ENCODE measurements at regions of chr1 and their contacts with region 1.

Region 1: GRCh38 chr1:77683160-77684148 is 996 bp upstream of the ZZZ3 start:
- DNase-seq: peak; percentile 45
- ATAC-seq: peak; percentile 84
- H3K4me3 ChIP-seq: peak overlapping the region; percentile 71
- H3K27ac ChIP-seq: peak overlapping the region; percentile 88
- H3K4me1 ChIP-seq: 0 out of 2 replicates have a peak, but pooled peaks cover 3% of the 10 kb centered on the region
- H3K27me3 ChIP-seq: no peaks in the 10 kb centered on the region
- CTCF ChIP-seq: peak; percentile 77 to 84 (median 80); a peak in 5 of 6 replicates
- EP300 ChIP-seq: no peak
- POLR2A ChIP-seq: peak; percentile 89
- RAD21 ChIP-seq: peak; percentile 47

Region 2: GRCh38 chr1:77538956-77539518 is 144.4 kb before region 1 on chr1:
- CTCF ChIA-PET with region 1: no interaction called
- POLR2A ChIA-PET with region 1: no interaction called
- RAD21 ChIA-PET with region 1: interaction called, 3 read pairs
- SMC1A ChIA-PET with region 1: interaction called, 4 read pairs
- in situ Hi-C with region 1: no loop called
- intact Hi-C with region 1: loop called (anchors 5 kb)
- DNase-seq: no peak
- ATAC-seq: peak; percentile 77
- H3K4me3 ChIP-seq: no peak overlapping the region
- H3K27ac ChIP-seq: no peak overlapping the region
- H3K4me1 ChIP-seq: peaks cover 30% of the 10 kb centered on the region
- H3K27me3 ChIP-seq: no peaks in the 10 kb centered on the region
- CTCF ChIP-seq: no peak
- EP300 ChIP-seq: no peak
- POLR2A ChIP-seq: no peak
- RAD21 ChIP-seq: no peak

Region 3: GRCh38 chr1:77585610-77586314 is 97.7 kb before region 1 on chr1:
- CTCF ChIA-PET with region 1: no interaction called
- POLR2A ChIA-PET with region 1: no interaction called
- RAD21 ChIA-PET with region 1: no interaction called
- SMC1A ChIA-PET with region 1: interaction called, 3 read pairs
- in situ Hi-C with region 1: no loop called
- intact Hi-C with region 1: loop called (anchors 5 kb)
- DNase-seq: no peak
- ATAC-seq: peak; percentile 40
- H3K4me3 ChIP-seq: no peak overlapping the region
- H3K27ac ChIP-seq: no peak overlapping the region
- H3K4me1 ChIP-seq: peaks cover 6% of the 10 kb centered on the region; the same call in 1 of the 2 replicates
- H3K27me3 ChIP-seq: no peaks in the 10 kb centered on the region
- CTCF ChIP-seq: no peak
- EP300 ChIP-seq: no peak
- POLR2A ChIP-seq: no peak
- RAD21 ChIP-seq: no peak

Region 4: DNA sequence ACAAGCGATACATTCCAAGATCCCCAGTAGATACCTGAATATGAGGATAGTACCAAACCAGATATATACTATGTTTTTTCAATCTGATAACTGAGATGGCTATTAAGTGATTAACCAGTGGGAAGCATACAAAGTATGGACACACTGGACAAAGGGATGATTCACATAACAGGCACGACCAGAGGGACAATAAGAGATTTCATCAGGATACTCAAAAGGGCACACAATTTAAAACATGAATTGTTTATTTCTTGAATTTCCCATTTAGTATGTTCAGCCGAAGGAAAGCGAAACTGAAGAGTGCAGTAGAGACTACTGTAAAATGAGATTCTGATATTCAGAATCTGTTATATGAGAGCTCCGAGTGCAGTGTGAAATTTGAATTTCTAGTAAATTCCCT is 11.6 kb before region 1 on chr1:
- CTCF ChIA-PET with region 1: interaction called, 5 read pairs
- POLR2A ChIA-PET with region 1: interaction called, 10 read pairs
- RAD21 ChIA-PET with region 1: interaction called, 4 read pairs
- SMC1A ChIA-PET with region 1: interaction called, 7 read pairs
- in situ Hi-C with region 1: no loop called
- intact Hi-C with region 1: no loop called
- DNase-seq: no peak
- ATAC-seq: peak; percentile 61
- H3K4me3 ChIP-seq: peak overlapping the region; percentile 60
- H3K27ac ChIP-seq: peak overlapping the region; percentile 82
- H3K4me1 ChIP-seq: peaks cover 25% of the 10 kb centered on the region
- H3K27me3 ChIP-seq: no peaks in the 10 kb centered on the region
- CTCF ChIP-seq: no peak
- EP300 ChIP-seq: no peak
- POLR2A ChIP-seq: no peak
- RAD21 ChIP-seq: no peak